Caco-2 (cell line): ENCODE measurements at regions of chr3 and their contacts with region 1.

Region 1: GRCh38 chr3:30319713-30320112 is 286.7 kb upstream of the TGFBR2 start:
- DNase-seq: peak; percentile 40 to 60
- H3K4me3 ChIP-seq: no peak overlapping the region
- H3K4me3 Mint-ChIP-seq: no peak overlapping the region
- H3K27ac Mint-ChIP-seq: no peak overlapping the region
- H3K4me1 ChIP-seq: peaks cover 5% of the 10 kb centered on the region
- H3K4me1 Mint-ChIP-seq: peaks cover 8% of the 10 kb centered on the region
- H3K27me3 ChIP-seq: no peaks in the 10 kb centered on the region
- H3K27me3 Mint-ChIP-seq: no peaks in the 10 kb centered on the region
- CTCF ChIP-seq: peak; percentile 15 to 51

Region 2: GRCh38 chr3:30437171-30437601 is 117.5 kb after region 1 on chr3:
- CTCF ChIA-PET with region 1: no interaction called
- POLR2A ChIA-PET with region 1: no interaction called
- intact Hi-C with region 1: loop called (anchors 5 kb)
- DNase-seq: no peak
- H3K4me3 ChIP-seq: no peak overlapping the region
- H3K4me3 Mint-ChIP-seq: no peak overlapping the region
- H3K27ac Mint-ChIP-seq: no peak overlapping the region
- H3K4me1 ChIP-seq: peaks cover 16% of the 10 kb centered on the region
- H3K4me1 Mint-ChIP-seq: peaks cover 21% of the 10 kb centered on the region
- H3K27me3 ChIP-seq: no peaks in the 10 kb centered on the region
- H3K27me3 Mint-ChIP-seq: no peaks in the 10 kb centered on the region
- CTCF ChIP-seq: no peak